Calu3 (cell line): ENCODE measurements at regions of chr11 and their contacts with region 1.

Region 1: DNA sequence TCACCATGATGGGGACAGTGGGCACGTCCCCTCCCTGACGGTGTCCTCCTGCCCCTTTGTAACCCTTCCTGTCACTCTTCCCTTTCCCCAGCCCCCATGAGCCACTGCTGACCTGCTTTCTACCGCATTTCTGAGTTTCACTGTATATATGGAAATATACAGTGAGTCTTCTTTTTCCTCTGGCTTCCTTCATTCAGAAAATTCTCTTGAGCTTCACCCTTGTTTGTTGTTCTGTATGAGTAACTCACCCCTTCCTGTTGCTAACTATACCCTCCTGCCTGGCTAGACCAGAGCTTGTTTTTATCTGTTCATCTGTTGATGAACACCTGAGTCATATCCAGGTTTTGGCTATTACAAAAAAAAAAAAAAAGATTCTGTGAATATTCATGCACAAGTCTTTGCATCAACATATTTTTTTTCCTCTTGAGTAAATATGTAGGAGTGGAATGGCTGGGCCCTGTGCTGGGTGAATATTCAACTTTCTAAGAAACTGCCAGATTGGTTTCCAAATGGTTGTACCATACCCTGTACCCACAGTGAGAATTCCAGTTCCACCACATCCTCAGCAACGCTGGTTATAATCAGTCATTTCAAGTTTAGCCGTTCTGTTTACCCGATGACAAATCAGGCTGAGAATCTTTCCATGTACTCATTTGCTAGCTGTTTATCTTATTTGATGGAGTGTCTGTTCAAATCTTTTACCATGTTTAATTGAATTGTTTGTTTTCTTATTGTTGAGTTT is 62.0 kb downstream of the IGF2 start:
- DNase-seq: peak; percentile 58
- H3K4me3 Mint-ChIP-seq: peak overlapping the region; percentile 24
- H3K27ac Mint-ChIP-seq: peak overlapping the region; percentile 83
- H3K4me1 Mint-ChIP-seq: peaks cover 13% of the 10 kb centered on the region
- H3K27me3 Mint-ChIP-seq: no peaks in the 10 kb centered on the region
- CTCF ChIP-seq: no peak

Region 2: DNA sequence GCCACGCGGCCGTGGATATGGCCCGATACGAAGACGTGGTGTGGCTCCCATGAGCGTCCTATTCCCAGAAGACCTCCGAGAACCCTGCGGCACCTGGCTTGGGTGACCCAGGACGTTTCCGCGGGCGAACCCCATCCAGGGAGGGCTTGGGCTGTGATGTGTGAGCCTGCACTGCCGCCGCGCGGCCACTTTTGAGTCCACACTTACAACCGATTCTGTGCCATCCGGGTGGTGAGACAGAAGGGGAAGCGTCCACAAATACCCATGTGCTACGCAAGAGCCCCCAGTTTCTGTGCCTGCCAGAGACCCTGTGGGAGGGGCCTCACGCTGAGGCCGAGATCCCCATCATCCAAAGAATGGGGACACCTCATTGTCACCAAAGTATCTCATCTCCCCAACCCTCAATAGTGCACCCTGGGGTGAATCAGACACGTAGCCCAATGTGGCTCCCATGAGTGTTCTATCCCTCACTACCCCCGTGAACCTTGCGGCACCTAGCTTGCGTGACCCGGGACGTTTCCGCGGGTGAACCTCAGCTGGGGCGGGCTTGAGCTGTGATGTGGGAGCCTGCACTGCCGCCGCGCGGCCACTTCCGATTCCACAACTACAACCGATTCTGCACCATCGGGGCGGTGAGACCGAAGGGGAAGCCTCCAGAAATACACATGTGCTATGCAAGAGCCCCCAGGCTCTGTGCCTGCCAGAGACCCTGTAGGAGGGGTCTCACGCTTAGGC is 75.0 kb before region 1 on chr11:
- CTCF ChIA-PET with region 1: no interaction called
- intact Hi-C with region 1: no loop called
- DNase-seq: no peak
- H3K4me3 Mint-ChIP-seq: no peak overlapping the region
- H3K27ac Mint-ChIP-seq: no peak overlapping the region
- H3K4me1 Mint-ChIP-seq: no peaks in the 10 kb centered on the region
- H3K27me3 Mint-ChIP-seq: no peaks in the 10 kb centered on the region
- CTCF ChIP-seq: no peak

Region 3: GRCh38 chr11:2142762-2143202 is 65.5 kb after region 1 on chr11:
- CTCF ChIA-PET with region 1: no interaction called
- intact Hi-C with region 1: loop called (anchors 5 kb)
- DNase-seq: no peak
- H3K4me3 Mint-ChIP-seq: no peak overlapping the region
- H3K27ac Mint-ChIP-seq: no peak overlapping the region
- H3K4me1 Mint-ChIP-seq: peaks cover 13% of the 10 kb centered on the region
- H3K27me3 Mint-ChIP-seq: peaks cover 84% of the 10 kb centered on the region
- CTCF ChIP-seq: no peak

Region 4: GRCh38 chr11:2269601-2270321 is 192.5 kb after region 1 on chr11:
- CTCF ChIA-PET with region 1: no interaction called
- intact Hi-C with region 1: no loop called
- DNase-seq: no peak
- H3K4me3 Mint-ChIP-seq: peak overlapping the region; percentile 71
- H3K27ac Mint-ChIP-seq: no peak overlapping the region
- H3K4me1 Mint-ChIP-seq: no peaks in the 10 kb centered on the region
- H3K27me3 Mint-ChIP-seq: peaks cover 78% of the 10 kb centered on the region
- CTCF ChIP-seq: no peak